ENCODE measurements at regions of chr2 and their contacts with region 1.

Region 1: DNA sequence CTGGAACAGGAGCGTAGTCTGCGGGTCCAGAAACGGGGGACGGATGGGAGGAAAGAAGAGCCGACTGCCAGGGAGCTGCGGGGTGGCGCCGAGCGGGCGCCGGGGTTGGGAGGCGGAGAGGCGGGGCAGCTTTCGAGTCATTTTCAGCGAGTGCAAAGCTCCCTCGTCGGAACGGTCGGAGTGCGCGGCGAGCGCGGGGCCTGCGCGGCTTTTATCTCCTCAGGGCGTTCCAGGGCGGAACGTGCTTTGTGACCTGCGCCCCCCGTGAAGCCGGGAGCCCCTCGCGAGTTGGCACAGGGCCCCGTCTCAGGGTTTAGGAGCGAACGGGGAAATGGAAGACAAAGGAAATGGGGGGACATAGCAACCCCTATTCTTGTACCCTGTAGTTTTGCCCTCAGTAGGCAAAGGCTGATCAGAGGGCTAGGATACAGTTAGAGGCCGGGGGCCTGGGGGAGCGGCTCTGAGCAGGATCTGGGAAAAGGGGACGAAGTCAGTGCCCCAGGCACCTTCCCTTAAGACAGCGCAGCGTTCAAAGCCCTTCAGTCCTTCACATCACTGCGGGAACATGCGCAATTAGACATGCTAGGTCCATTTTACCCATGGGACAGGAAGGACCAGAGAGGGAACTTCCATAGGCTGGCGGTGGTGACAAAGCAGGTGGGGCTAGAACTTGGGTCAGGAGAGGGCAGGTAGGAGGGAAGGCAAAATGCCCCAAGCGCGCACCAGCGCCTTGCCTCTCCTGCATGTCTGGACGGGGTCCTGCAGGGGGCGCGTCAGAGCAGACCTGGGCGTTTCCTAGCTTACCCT is 60.1 kb upstream of the IL1RL1 start:
- H3K4me3 Mint-ChIP-seq: peak overlapping the region; percentile 73
- H3K27ac Mint-ChIP-seq: peak overlapping the region; percentile 64
- H3K4me1 Mint-ChIP-seq: peaks cover 27% of the 10 kb centered on the region
- H3K27me3 Mint-ChIP-seq: peaks cover 49% of the 10 kb centered on the region

Region 2: GRCh38 chr2:102074152-102074783 is 177.0 kb before region 1 on chr2:
- intact Hi-C with region 1: no loop called
- H3K4me3 Mint-ChIP-seq: no peak overlapping the region
- H3K27ac Mint-ChIP-seq: peak overlapping the region; percentile 86
- H3K4me1 Mint-ChIP-seq: peaks cover 55% of the 10 kb centered on the region
- H3K27me3 Mint-ChIP-seq: no peaks in the 10 kb centered on the region

Region 3: GRCh38 chr2:102262216-102263129 is 11.2 kb after region 1 on chr2:
- intact Hi-C with region 1: no loop called
- H3K4me3 Mint-ChIP-seq: no peak overlapping the region
- H3K27ac Mint-ChIP-seq: no peak overlapping the region
- H3K4me1 Mint-ChIP-seq: peaks cover 13% of the 10 kb centered on the region
- H3K27me3 Mint-ChIP-seq: peaks cover 14% of the 10 kb centered on the region

Region 4: DNA sequence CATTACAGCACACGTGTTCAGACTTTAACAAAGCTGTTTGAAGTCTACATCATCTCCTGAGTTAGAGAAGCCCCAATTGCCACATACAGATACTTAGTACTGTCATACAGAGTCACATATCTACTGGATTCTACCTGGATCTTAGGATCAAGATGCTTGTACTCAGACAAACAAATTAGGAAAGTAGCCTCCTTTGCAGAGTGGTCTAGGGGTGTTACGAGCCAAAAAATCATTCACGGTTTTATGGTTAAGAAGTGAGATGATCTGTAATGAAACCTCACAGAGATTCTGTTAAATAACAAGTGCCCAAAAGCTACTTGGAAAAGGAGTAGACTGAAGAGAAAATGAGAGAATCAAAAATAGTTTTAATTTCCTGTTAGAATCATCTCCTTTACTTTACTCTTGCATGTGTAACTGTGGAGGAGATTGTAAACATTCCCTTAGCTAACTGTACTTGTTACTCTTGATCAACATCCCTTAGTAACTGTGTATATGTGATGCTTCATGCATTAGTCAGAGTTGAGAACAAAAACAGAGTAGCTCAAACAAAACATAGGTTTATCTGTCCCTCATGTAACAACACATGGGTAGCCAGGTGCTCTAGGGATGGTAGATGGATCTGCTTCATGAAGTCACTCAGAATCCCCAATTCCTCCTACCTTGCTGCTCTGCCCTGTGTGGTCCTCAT is 43.7 kb after region 1 on chr2:
- intact Hi-C with region 1: loop called (anchors 5 kb)
- H3K4me3 Mint-ChIP-seq: no peak overlapping the region
- H3K27ac Mint-ChIP-seq: no peak overlapping the region
- H3K4me1 Mint-ChIP-seq: peaks cover 39% of the 10 kb centered on the region
- H3K27me3 Mint-ChIP-seq: peaks cover 44% of the 10 kb centered on the region

Region 5: DNA sequence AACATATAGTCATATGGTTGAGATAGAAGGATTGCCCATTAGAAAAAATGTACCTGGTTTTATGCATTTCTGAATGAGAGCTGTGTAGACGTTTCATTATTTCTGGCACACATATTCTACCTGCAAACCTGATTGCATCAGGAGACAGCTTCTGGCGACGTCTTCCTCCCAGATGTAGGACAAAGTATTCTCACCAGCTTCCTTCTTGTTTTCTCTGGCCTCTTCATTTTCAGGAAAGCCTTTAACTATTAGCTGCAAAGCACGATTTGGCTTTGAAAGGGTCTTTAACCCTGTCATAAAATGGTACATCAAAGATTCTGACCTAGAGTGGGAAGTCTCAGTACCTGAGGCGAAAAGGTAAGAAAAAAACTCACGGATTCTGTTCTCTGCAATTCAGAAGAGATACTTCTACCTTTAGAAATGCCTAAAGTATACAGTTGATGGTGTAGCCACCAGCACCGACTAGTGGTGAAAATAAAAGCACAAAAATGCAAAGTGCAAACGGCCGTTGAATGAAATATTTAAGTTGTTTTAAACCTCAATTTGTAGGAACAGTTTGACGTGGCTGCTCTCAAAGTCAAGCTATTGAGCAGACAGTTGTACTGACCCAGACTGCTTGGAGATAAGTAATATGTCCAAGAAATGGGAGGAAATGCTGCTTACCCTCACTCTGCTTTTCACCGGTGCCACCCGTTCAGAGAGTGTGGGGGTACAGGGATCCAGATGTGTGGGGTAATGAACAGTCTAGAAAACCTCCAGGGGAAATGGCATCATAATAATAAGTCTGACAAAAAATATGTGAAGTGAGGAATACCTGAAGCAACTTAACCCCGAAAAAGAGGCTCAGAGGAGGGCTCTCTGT is 192.0 kb after region 1 on chr2:
- intact Hi-C with region 1: loop called (anchors 2 kb)
- H3K4me3 Mint-ChIP-seq: no peak overlapping the region
- H3K27ac Mint-ChIP-seq: no peak overlapping the region
- H3K4me1 Mint-ChIP-seq: no peaks in the 10 kb centered on the region
- H3K27me3 Mint-ChIP-seq: peaks cover 6% of the 10 kb centered on the region